ENCODE measurements at regions of chr22 and their contacts with region 1.

Region 1: GRCh38 chr22:32985899-32986765 is 72.0 kb downstream of the SYN3 start:
- DNase-seq: peak; percentile 77
- H3K4me3 ChIP-seq: no peak overlapping the region; a peak in 1 of 4 replicates
- H3K27ac ChIP-seq: peak overlapping the region in 1 of 2 experiments; percentile 71; a peak in 2 of 4 replicates
- H3K4me1 ChIP-seq: peaks cover 0 to 23% of the 10 kb centered on the region in 2 experiments; a peak in 1 of 4 replicates
- H3K27me3 ChIP-seq: no peaks in the 10 kb centered on the region
- CTCF ChIP-seq: peak; percentile 72
- EP300 ChIP-seq: no peak
- RAD21 ChIP-seq: peak; percentile 96

Region 2: DNA sequence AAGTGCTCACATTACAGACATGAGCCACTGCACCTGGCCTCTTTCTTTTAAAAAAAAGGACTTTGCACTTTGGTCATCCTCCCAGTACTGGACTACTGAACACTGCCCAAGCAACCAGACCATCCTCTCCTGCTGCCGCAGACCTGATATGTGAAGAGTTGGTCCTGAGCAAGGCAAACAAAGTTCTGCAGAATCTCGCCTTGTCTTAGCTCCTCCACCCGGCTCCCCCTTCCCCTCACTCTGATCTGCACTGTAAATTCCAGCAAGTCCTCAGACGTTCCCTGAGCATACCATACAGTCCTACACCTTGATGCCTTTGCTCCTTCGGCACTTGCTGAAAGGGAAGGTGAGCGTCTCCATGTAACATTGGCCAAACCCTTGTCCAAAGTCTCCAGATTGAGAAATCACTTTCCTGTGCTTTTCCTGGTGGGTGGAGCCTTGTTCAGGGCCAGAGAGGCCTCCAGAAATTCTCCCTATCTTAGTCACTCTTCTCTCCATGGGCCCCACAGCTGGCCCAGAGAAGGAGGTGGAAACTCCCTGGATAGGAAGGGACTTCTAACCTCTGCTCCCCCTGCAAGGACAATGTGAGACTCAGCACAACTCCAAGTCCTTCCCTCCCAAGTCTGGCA is 231.6 kb before region 1 on chr22:
- CTCF ChIA-PET with region 1: no interaction called
- POLR2A ChIA-PET with region 1: no interaction called
- DNase-seq: no peak
- H3K4me3 ChIP-seq: no peak overlapping the region
- H3K27ac ChIP-seq: no peak overlapping the region
- H3K4me1 ChIP-seq: no peaks in the 10 kb centered on the region
- H3K27me3 ChIP-seq: no peaks in the 10 kb centered on the region
- CTCF ChIP-seq: no peak
- EP300 ChIP-seq: no peak
- RAD21 ChIP-seq: no peak

Region 3: GRCh38 chr22:32775957-32776356 is 210.2 kb before region 1 on chr22:
- CTCF ChIA-PET with region 1: interaction called, 22 read pairs
- POLR2A ChIA-PET with region 1: no interaction called
- DNase-seq: peak; percentile 43
- H3K4me3 ChIP-seq: no peak overlapping the region
- H3K27ac ChIP-seq: no peak overlapping the region
- H3K4me1 ChIP-seq: no peaks in the 10 kb centered on the region; a peak in 1 of 4 replicates
- H3K27me3 ChIP-seq: no peaks in the 10 kb centered on the region
- CTCF ChIP-seq: peak; percentile 32; the same call in 1 of the 2 replicates
- EP300 ChIP-seq: no peak
- RAD21 ChIP-seq: peak; percentile 56

Region 4: GRCh38 chr22:32830473-32830872 is 155.7 kb before region 1 on chr22:
- CTCF ChIA-PET with region 1: interaction called, 14 read pairs
- POLR2A ChIA-PET with region 1: no interaction called
- DNase-seq: no peak
- H3K4me3 ChIP-seq: no peak overlapping the region
- H3K27ac ChIP-seq: no peak overlapping the region
- H3K4me1 ChIP-seq: peaks cover 0 to 6% of the 10 kb centered on the region in 2 experiments; a peak in 1 of 4 replicates
- H3K27me3 ChIP-seq: no peaks in the 10 kb centered on the region
- CTCF ChIP-seq: no peak
- EP300 ChIP-seq: no peak
- RAD21 ChIP-seq: no peak

Region 5: GRCh38 chr22:32858116-32858703 is 127.9 kb before region 1 on chr22:
- CTCF ChIA-PET with region 1: interaction called, 16 read pairs
- POLR2A ChIA-PET with region 1: no interaction called
- DNase-seq: no peak
- H3K4me3 ChIP-seq: no peak overlapping the region
- H3K27ac ChIP-seq: peak overlapping the region in 1 of 2 experiments; percentile 28; a peak in 1 of 4 replicates
- H3K4me1 ChIP-seq: peaks cover 0 to 26% of the 10 kb centered on the region in 2 experiments; a peak in 2 of 4 replicates
- H3K27me3 ChIP-seq: no peaks in the 10 kb centered on the region
- CTCF ChIP-seq: no peak
- EP300 ChIP-seq: no peak
- RAD21 ChIP-seq: no peak

Region 6: DNA sequence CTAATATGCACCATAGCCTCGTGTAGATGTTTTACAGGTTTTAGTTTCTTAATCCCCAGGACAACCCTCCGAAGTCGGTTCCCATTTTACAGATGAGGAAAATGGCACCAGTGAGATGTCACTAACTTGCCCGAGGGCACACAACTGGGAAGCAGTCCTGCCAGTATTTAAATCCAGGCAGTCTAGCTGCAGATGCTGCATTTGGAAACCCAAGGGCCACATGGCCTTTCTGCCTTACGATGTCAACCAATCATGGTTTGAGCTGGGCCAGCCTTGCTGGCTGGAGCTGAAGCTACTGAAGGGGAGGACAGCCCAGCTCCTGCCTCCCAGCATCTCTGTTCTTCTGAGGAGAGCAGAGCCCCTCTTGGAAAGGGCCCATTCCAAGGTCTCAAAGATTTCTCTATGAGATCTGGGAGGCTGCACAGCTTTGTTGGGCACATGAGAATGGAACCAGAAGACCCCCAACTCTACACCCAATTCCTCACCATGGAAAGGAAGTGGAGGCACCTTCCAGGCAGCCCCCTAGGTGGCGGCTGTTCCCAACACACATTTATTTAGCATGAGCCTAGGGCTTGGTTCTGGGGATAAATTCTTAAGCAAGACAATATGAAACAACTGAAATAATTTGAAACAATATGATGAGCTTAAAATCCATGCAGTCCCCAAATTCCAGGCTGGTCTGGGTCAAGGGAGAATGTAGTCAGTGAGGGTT is 84.4 kb before region 1 on chr22:
- CTCF ChIA-PET with region 1: interaction called, 17 read pairs
- POLR2A ChIA-PET with region 1: no interaction called
- DNase-seq: no peak
- H3K4me3 ChIP-seq: no peak overlapping the region
- H3K27ac ChIP-seq: no peak overlapping the region
- H3K4me1 ChIP-seq: peaks cover 0 to 20% of the 10 kb centered on the region in 2 experiments; a peak in 2 of 4 replicates
- H3K27me3 ChIP-seq: no peaks in the 10 kb centered on the region
- CTCF ChIP-seq: no peak
- EP300 ChIP-seq: no peak
- RAD21 ChIP-seq: peak; percentile 39

Region 7: DNA sequence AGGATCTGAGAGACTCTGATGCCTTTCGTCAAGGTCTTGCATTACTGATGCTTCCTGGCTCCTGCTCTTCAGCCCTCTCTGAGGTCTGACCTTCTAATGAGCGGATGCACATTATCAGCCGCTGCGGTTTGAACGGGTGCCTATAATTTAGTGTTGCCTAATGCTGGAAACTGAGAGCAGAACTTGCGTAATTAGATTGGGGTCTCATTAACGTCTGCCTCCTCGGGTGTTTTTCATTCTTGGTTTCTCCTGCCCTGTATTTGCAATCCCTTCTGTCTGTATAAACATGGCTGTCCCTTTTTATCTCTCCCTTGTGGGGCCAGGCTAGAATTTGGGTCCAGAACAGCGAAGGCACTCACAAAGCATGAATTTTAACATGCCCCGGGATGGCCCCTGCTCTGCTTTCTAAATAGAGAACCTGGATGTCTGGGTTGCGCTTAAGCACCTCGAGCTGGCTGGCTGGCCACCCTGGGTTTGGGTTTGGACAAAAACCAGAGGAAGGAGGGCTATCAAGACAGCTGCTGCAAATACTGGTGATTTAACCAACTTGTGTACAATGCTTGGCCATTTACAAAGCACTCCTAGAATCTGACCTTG is 66.0 kb before region 1 on chr22:
- CTCF ChIA-PET with region 1: interaction called, 14 read pairs
- POLR2A ChIA-PET with region 1: no interaction called
- DNase-seq: peak; percentile 51
- H3K4me3 ChIP-seq: no peak overlapping the region
- H3K27ac ChIP-seq: peak overlapping the region in 1 of 2 experiments; percentile 98; a peak in 2 of 4 replicates
- H3K4me1 ChIP-seq: peaks cover 0 to 49% of the 10 kb centered on the region in 2 experiments; a peak in 2 of 4 replicates
- H3K27me3 ChIP-seq: no peaks in the 10 kb centered on the region
- CTCF ChIP-seq: no peak
- EP300 ChIP-seq: peak in 1 of 2 experiments; percentile 70; a peak in 2 of 4 replicates
- RAD21 ChIP-seq: no peak; the same call in 1 of the 2 replicates

Region 8: DNA sequence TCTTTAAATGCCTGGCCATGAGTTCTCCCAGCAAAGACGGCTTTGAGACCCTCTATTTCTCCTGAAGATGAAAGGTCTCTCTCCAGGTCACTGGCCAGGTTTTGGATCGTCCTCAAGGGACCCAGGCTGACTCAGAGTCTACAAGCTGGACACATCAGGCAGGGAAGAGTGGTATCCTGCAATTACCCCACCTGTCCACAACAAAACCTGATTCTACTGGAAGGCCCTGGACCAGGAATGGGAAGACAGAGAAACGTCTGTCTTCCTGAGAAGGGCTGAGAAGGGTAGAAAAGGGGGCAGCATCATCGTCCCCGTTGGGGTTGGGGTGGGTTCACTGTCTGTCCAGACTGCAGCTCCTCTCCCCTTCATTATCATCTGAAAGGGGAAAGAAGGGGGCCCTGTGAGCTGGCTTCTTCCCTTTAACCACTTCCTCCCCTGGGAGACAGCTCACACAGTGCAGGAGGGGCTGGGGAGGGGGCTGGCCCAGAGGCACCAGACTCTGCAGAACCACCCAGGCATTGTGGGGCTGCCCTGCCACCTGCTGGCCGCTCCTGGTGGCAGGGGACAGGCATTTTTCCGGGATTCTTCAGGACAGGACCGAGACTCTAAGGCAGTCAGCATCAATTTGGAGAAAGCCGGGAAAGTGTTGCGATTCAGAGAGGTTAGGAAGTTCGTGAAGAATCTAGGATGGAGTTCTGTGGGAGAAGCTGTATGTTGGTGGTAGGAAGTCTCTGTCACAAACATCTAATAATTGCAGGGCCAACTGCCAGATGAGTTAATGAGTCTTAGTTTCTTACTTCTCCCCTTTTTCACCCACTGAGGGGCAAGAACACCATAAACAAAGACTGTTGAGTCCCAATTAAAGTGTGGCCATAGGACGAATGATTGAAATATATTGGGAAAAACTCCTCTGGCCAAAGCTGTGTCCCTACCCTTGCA is 14.5 kb after region 1 on chr22:
- CTCF ChIA-PET with region 1: interaction called, 18 read pairs
- POLR2A ChIA-PET with region 1: no interaction called
- DNase-seq: peak; percentile 82
- H3K4me3 ChIP-seq: no peak overlapping the region; a peak in 1 of 4 replicates
- H3K27ac ChIP-seq: no peak overlapping the region
- H3K4me1 ChIP-seq: no peaks in the 10 kb centered on the region; a peak in 1 of 4 replicates
- H3K27me3 ChIP-seq: no peaks in the 10 kb centered on the region
- CTCF ChIP-seq: peak; percentile 84
- EP300 ChIP-seq: no peak
- RAD21 ChIP-seq: peak; percentile 94

Measured in SK-N-SH (cell line).